ENCODE measurements at regions of chr1 and their contacts with region 1.

Region 1: DNA sequence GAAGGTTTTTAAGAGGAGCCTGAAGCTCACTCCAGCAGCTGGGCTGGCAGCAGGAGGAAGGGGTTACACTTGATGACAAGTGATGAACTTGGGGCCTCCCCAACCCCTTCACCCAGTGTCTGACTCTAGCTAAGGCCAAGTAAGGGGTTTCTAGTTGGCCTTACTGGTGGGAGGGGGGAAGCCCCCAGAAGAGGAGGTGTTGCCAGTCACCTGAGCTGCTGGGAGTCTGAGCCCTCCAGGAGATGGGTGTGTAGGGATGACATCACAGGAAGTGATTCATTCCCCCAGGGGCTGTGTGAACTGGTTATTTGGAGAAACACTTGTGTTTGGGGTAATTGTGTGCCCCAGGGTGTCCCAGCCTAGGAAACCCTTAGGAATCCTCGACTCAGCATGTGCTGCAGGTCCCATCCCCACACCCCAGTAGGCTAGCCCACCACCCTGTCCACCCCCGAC is 3.1 kb downstream of the PADI1 start:
- DNase-seq: no peak
- H3K4me3 ChIP-seq: no peak overlapping the region
- H3K27ac ChIP-seq: no peak overlapping the region
- H3K4me1 ChIP-seq: peaks cover 0 to 10% of the 10 kb centered on the region in 2 donors
- H3K27me3 ChIP-seq: no peaks in the 10 kb centered on the region
- CTCF ChIP-seq: no peak
- POLR2A ChIP-seq: no peak

Region 2: GRCh38 chr1:17229383-17229782 is 21.4 kb after region 1 on chr1:
- intact Hi-C with region 1: loop called (anchors 1 kb)
- DNase-seq: no peak
- H3K4me3 ChIP-seq: no peak overlapping the region
- H3K27ac ChIP-seq: no peak overlapping the region
- H3K4me1 ChIP-seq: no peaks in the 10 kb centered on the region
- H3K27me3 ChIP-seq: no peaks in the 10 kb centered on the region
- CTCF ChIP-seq: no peak
- POLR2A ChIP-seq: no peak

Measured in breast epithelium (tissue), 4 donors.